ENCODE measurements at regions of chr16 and their contacts with region 1.

Region 1: DNA sequence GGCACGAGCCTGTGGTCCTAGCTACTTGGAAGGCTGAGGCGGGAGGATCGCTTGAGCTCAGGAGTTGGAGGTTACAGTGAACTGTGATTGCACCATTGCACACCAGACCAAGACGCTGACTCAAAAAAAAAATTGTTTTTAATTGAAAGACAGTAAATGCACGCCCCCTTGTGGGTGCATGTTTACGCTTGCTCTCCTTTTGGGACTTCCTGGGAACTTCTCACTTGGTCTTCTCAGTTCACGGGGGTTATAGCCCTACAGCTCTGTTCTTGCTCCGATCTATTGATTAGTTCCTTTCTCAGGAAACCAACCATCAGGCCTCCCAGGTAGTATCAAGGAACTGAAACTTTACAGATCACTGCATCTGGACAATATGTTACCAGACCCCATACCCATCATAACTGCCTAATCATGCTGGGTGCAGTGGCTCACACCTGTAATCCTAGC is 14.2 kb upstream of the RIPOR1 start:
- DNase-seq: peak; percentile 89
- ATAC-seq: peak; percentile 14
- H3K4me3 ChIP-seq: no peak overlapping the region
- H3K4me3 Mint-ChIP-seq: peak overlapping the region; percentile 66
- H3K27ac ChIP-seq: peak overlapping the region; percentile 59 to 67
- H3K27ac Mint-ChIP-seq: peak overlapping the region; percentile 96
- H3K4me1 ChIP-seq: peaks cover 64 to 76% of the 10 kb centered on the region in 2 donors
- H3K4me1 Mint-ChIP-seq: peaks cover 64% of the 10 kb centered on the region
- H3K27me3 ChIP-seq: no peaks in the 10 kb centered on the region
- H3K27me3 Mint-ChIP-seq: no peaks in the 10 kb centered on the region
- CTCF ChIP-seq: peak; percentile 68

Region 2: GRCh38 chr16:67349172-67349571 is 165.2 kb before region 1 on chr16:
- CTCF ChIA-PET with region 1: no interaction called
- POLR2A ChIA-PET with region 1: no interaction called
- intact Hi-C with region 1: no loop called
- DNase-seq: peak; percentile 62
- ATAC-seq: peak; percentile 62
- H3K4me3 ChIP-seq: no peak overlapping the region
- H3K4me3 Mint-ChIP-seq: no peak overlapping the region
- H3K27ac ChIP-seq: no peak overlapping the region
- H3K27ac Mint-ChIP-seq: no peak overlapping the region
- H3K4me1 ChIP-seq: no peaks in the 10 kb centered on the region
- H3K4me1 Mint-ChIP-seq: no peaks in the 10 kb centered on the region
- H3K27me3 ChIP-seq: no peaks in the 10 kb centered on the region
- H3K27me3 Mint-ChIP-seq: peaks cover 3% of the 10 kb centered on the region
- CTCF ChIP-seq: peak; percentile 74

Region 3: GRCh38 chr16:67428146-67428731 is 86.2 kb before region 1 on chr16:
- CTCF ChIA-PET with region 1: interaction called, 17 read pairs
- POLR2A ChIA-PET with region 1: no interaction called
- intact Hi-C with region 1: no loop called
- DNase-seq: peak; percentile 74
- ATAC-seq: peak; percentile 71
- H3K4me3 ChIP-seq: no peak overlapping the region
- H3K4me3 Mint-ChIP-seq: no peak overlapping the region
- H3K27ac ChIP-seq: no peak overlapping the region
- H3K27ac Mint-ChIP-seq: no peak overlapping the region
- H3K4me1 ChIP-seq: peaks cover 20 to 22% of the 10 kb centered on the region in 2 donors
- H3K4me1 Mint-ChIP-seq: peaks cover 18% of the 10 kb centered on the region
- H3K27me3 ChIP-seq: peaks cover 0 to 48% (median 17%) of the 10 kb centered on the region in 4 experiments
- H3K27me3 Mint-ChIP-seq: peaks cover 52% of the 10 kb centered on the region
- CTCF ChIP-seq: peak; percentile 79

Region 4: DNA sequence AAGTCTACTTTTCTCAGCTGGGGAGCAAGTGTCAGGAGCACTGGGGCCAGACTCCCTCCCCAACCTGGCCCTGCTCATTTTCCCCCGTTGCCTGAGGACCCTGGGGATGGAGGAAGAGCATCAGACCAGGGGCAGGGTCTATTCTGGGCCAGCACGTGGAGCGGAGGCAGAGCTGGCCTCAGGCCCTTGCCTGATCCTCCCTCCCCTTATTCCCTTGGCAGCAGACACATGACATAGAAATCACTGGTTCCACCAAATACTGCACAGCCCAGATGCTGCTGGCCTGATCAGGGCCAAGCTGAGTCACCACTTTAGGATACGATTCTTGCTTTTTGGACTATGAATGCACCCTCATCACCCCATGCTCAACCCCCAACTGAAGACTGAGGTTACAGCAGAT is 15.3 kb before region 1 on chr16:
- CTCF ChIA-PET with region 1: interaction called, 817 read pairs
- POLR2A ChIA-PET with region 1: interaction called, 6 read pairs
- intact Hi-C with region 1: loop called (anchors 1 kb)
- DNase-seq: no peak
- ATAC-seq: no peak
- H3K4me3 ChIP-seq: no peak overlapping the region
- H3K4me3 Mint-ChIP-seq: no peak overlapping the region
- H3K27ac ChIP-seq: no peak overlapping the region
- H3K27ac Mint-ChIP-seq: peak overlapping the region; percentile 70
- H3K4me1 ChIP-seq: peaks cover 13 to 17% of the 10 kb centered on the region in 2 donors
- H3K4me1 Mint-ChIP-seq: peaks cover 29% of the 10 kb centered on the region
- H3K27me3 ChIP-seq: no peaks in the 10 kb centered on the region
- H3K27me3 Mint-ChIP-seq: no peaks in the 10 kb centered on the region
- CTCF ChIP-seq: no peak

Region 5: GRCh38 chr16:67530013-67530939 is 15.9 kb after region 1 on chr16:
- CTCF ChIA-PET with region 1: interaction called, 71 read pairs
- POLR2A ChIA-PET with region 1: interaction called, 19 read pairs
- intact Hi-C with region 1: loop called (anchors 2 kb)
- DNase-seq: peak; percentile 94
- ATAC-seq: peak; percentile 59
- H3K4me3 ChIP-seq: peak overlapping the region; percentile 65 to 92 (median 85)
- H3K4me3 Mint-ChIP-seq: peak overlapping the region; percentile 95
- H3K27ac ChIP-seq: peak overlapping the region; percentile 96 to 100
- H3K27ac Mint-ChIP-seq: peak overlapping the region; percentile 98
- H3K4me1 ChIP-seq: peaks cover 38 to 70% of the 10 kb centered on the region in 2 donors
- H3K4me1 Mint-ChIP-seq: peaks cover 63% of the 10 kb centered on the region
- H3K27me3 ChIP-seq: no peaks in the 10 kb centered on the region
- H3K27me3 Mint-ChIP-seq: no peaks in the 10 kb centered on the region
- CTCF ChIP-seq: no peak

Region 6: GRCh38 chr16:67667817-67668494 is 153.6 kb after region 1 on chr16:
- CTCF ChIA-PET with region 1: interaction called, 136 read pairs
- POLR2A ChIA-PET with region 1: interaction called, 3 read pairs
- intact Hi-C with region 1: no loop called
- DNase-seq: peak; percentile 89
- ATAC-seq: peak; percentile 81
- H3K4me3 ChIP-seq: peak overlapping the region in 4 of 5 experiments; percentile 67 to 91 (median 80)
- H3K4me3 Mint-ChIP-seq: peak overlapping the region; percentile 91
- H3K27ac ChIP-seq: peak overlapping the region; percentile 77 to 86
- H3K27ac Mint-ChIP-seq: peak overlapping the region; percentile 84
- H3K4me1 ChIP-seq: peaks cover 36 to 49% of the 10 kb centered on the region in 2 donors
- H3K4me1 Mint-ChIP-seq: peaks cover 49% of the 10 kb centered on the region
- H3K27me3 ChIP-seq: no peaks in the 10 kb centered on the region
- H3K27me3 Mint-ChIP-seq: no peaks in the 10 kb centered on the region
- CTCF ChIP-seq: peak; percentile 75